GM10248 (cell line): ENCODE measurements at regions of chr1 and their contacts with region 1.

Region 1: DNA sequence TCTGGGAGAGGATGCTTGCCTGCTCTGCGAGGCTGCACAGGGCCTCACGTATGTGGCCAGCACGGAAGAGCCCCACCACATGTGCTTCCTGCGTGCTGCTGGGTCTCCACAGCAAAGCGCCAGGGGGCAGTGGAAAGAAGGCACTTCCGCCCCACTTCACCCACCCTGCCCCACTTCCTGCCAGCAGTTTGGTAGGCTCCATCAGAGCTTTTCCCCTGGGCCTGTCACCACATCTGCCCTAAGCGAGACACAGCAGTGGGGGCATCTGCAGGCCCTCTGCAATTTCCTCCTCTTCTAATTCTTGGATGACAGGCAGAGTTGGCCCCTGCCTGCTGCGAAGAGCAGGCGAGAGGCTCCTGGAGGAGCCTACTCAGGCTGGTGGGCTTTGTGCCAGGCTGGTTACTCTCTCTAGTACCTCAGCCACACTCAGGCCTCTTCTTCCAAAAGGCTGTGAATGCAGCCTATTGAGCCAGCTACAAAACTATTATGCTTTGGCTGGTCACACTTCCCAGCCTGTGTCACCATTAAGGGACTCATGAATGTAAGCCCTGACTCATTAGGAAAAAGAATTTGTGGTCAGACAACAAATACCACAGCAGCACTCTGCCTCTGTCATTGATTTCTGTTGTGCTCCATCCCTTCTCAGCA is 25.0 kb downstream of the CD244 start:
- DNase-seq: peak; percentile 73
- CTCF ChIP-seq: peak; percentile 41

Region 2: DNA sequence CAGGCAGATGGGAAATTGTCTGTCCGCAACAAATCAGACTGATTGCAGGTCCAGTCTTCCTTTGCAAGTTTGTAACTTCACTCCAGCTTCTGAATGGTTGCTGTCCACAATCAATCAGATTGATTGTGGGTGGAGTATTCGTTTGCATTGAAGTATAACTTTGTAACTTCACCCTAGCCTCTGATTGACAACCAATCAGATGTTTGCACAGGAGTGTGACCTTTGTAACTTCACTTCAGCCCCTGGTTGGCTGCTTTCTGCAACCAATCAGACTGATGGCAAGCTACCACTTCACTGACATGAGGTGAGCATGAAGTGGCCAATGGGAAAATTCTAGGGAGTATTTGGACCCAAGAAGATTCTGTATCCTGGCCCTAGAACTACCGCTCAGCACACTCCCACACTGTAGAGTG is 1372.5 kb before region 1 on chr1:
- CTCF ChIA-PET with region 1: no interaction called
- POLR2A ChIA-PET with region 1: no interaction called
- DNase-seq: no peak
- CTCF ChIP-seq: no peak

Region 3: GRCh38 chr1:160681067-160681890 is 156.4 kb before region 1 on chr1:
- CTCF ChIA-PET with region 1: interaction called, 10 read pairs
- POLR2A ChIA-PET with region 1: no interaction called
- DNase-seq: peak; percentile 55
- CTCF ChIP-seq: peak; percentile 93

Region 4: GRCh38 chr1:160795951-160796383 is 41.7 kb before region 1 on chr1 and contains the start of gene LY9:
- CTCF ChIA-PET with region 1: interaction called, 42 read pairs
- POLR2A ChIA-PET with region 1: no interaction called
- DNase-seq: peak; percentile 74
- CTCF ChIP-seq: no peak

Region 5: DNA sequence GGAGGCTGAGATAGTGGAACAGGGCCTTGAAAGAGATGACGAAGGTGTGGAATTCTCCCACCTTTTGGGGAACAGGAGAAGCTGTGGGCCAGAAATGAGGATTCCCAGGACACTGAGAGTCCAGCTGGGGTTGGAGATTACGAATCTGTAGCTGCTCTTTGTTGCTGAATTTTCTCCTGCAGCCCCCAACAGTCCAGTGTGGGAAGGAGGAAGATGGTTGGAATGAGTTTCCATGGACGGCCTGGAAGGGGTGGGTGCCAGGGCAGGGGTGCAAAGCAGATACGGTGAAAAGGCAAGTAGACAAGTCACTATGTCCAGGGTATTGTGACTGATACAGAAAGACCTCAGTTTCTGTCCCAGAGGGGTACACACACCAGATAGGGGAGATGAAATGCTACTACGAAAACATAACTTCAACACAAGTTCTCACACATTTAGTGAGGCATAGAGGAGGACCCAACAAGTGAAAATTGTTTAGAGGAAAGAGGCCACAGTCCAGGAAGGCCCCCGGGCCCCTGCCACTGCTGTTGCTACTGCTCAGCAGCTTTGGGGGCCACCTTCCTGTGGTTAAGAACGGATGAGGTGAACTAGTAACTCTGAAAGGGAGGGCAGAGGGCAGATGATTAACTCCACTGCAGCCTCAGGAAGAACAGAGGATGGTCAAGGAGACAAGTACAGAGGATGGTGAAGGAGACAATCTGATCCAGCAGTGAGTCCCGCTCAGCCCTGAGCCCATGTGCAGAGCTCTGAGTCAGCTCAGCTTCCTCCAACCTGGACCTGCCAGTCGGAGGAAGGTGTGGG is 17.7 kb after region 1 on chr1:
- CTCF ChIA-PET with region 1: interaction called, 38 read pairs
- POLR2A ChIA-PET with region 1: no interaction called
- DNase-seq: peak; percentile 53
- CTCF ChIP-seq: no peak

Region 6: GRCh38 chr1:160877221-160877620 is 39.5 kb after region 1 on chr1:
- CTCF ChIA-PET with region 1: interaction called, 10 read pairs
- POLR2A ChIA-PET with region 1: no interaction called
- DNase-seq: peak; percentile 42
- CTCF ChIP-seq: peak; percentile 15